Ovary (tissue), 10 donors: ENCODE measurements at regions of chr9 and their contacts with region 1.

Region 1: DNA sequence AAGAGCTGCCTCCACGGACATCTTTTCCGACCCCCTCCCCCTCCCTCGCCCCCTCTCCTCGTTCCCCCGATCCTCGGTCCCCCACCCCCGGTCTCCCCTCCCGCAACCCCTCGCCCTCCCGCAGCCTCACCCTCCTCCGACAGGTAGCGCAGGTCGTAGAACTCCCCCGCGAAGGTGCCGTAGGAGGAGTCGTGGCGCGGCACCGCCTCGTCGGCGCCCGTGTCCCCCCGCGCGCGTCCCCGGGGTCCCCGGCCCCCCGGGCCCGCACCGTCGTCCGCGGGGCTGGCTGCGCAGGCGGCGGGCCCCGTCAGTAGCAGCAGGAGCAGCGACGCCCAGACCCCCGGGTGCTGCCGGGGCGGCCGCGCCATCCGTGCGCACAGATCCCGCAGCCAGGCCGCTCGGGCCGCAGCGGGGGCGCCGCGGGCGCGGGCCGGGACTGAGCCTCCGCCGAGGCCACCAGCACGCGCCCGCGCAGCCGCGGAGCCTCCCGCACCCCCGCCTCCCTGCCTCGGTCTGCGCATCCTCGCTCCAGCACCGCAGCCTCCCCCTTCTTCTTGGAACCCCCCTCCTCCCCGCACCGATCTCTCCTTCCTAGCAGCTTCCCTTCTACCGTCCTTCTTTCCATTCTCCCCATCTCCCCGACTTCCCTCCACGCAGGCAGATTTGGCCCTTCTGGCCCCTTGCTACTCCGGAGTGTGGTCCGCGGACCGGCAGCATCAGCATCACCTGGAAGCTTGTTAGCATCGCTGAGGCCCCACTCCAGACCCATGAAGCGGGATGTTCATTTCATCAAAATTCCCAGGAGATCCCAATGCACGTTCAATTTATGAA is at the start of gene FRRS1L:
- DNase-seq: peak; percentile 59 to 75 (median 69)
- H3K4me3 ChIP-seq: peak within 1 kb of the TSS; percentile 35
- H3K27ac ChIP-seq: peak within 1 kb of the TSS; percentile 7 to 39
- H3K4me1 ChIP-seq: no peaks in the 10 kb centered on the region
- H3K27me3 ChIP-seq: no peaks in the 10 kb centered on the region
- CTCF ChIP-seq: no peak
- EP300 ChIP-seq: no peak
- POLR2A ChIP-seq: no peak
- total RNA-seq, gene FRRS1L: 8.3 to 49.8 (median 31.5) TPM

Region 2: GRCh38 chr9:109122726-109123621 is 44.0 kb before region 1 on chr9:
- intact Hi-C with region 1: no loop called
- DNase-seq: no peak
- H3K4me3 ChIP-seq: no peak overlapping the region
- H3K27ac ChIP-seq: no peak overlapping the region
- H3K4me1 ChIP-seq: peaks cover 2% of the 10 kb centered on the region
- H3K27me3 ChIP-seq: no peaks in the 10 kb centered on the region
- CTCF ChIP-seq: no peak
- EP300 ChIP-seq: no peak
- POLR2A ChIP-seq: no peak

Region 3: GRCh38 chr9:109232449-109233237 is 65.7 kb after region 1 on chr9:
- intact Hi-C with region 1: loop called in 1 of 4 experiments (anchors 10 kb)
- DNase-seq: no peak
- H3K4me3 ChIP-seq: no peak overlapping the region
- H3K27ac ChIP-seq: no peak overlapping the region
- H3K4me1 ChIP-seq: no peaks in the 10 kb centered on the region
- H3K27me3 ChIP-seq: no peaks in the 10 kb centered on the region
- CTCF ChIP-seq: no peak
- EP300 ChIP-seq: no peak
- POLR2A ChIP-seq: no peak